ENCODE measurements at regions of chr20 and their contacts with region 1.

Region 1: DNA sequence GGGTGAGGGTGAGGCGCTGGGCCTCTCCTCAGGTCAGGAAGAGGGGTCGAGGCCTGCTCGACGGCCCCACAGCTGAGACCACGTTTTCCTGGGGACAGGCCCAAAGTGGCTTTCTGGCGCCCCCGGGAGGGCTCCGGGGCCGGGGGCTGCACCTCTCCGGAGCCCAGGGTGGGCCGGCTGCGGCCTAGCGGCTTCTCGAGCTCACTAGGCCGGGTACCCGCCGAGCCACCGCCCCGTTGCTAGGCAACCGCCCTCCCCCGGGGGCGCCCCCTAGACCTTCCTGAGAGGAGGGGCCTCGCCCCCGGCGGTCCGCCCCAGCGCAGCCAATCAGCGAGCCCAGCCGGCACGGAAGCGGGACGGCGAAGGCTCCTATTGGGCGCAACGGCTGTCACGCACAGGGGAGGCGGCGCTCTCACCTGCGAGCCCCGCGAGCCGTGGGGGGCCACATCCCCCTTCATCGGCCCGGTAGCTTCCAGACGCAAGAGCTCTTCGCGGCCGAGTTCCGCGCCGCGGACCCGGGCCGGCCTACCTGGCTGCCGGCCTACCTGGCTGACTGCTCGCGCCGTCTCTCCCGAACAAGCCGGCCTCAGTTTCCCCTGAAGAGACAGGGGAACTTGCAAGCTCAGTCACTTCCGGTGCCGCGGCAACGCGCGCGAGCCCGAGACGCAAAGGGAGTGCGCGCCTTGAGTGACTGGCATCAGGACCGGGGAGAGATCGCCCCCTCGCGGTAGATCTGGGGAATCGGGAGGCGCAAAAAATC is 831 bp upstream of the BCL2L1 start:
- DNase-seq: peak; percentile 98 to 99 (median 99)
- H3K4me3 ChIP-seq: peak overlapping the region; percentile 96
- H3K27ac ChIP-seq: peak overlapping the region; percentile 79 to 93
- H3K4me1 ChIP-seq: peaks cover 21% of the 10 kb centered on the region
- H3K27me3 ChIP-seq: no peaks in the 10 kb centered on the region
- CTCF ChIP-seq: peak; percentile 93 to 97 (median 95)
- EP300 ChIP-seq: no peak
- POLR2A ChIP-seq: peak; percentile 69

Region 2: DNA sequence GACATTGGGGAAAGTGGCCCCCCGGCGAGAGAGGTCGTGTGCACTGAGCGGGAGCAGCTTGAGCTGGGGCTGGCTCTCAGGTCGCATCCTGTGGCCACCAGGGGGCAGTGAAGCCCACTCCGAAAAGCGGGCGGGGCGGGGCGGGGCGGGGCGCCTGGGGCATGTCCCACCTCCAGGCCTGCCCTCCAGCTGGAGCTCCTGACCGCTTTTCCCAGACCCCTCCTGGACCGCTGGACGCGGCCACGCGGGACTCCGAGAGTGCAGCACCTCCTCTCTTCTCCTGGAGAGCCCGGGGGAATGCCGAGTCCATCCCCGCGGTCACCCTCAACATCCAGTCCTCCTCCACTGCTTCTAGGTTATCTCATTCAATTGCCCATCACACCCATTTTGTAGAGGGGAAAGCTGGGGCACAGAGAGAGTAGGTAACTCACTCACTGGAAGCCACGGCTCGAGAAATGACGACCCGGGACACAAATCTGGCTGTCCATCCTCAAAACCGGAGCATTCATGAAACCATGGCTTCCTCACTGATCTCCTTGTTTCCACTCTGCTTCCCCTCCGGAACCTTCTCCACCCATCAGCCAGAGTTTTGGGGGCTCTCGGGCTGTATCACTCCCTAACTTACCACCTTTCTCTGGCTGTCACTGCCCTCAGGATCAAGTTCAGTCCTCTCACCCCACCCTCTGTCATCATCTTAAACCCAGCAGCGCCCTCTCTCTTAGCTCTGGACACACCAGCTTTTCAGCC is 61.7 kb before region 1 on chr20:
- intact Hi-C with region 1: loop called (anchors 1 to 2 kb)
- DNase-seq: peak; percentile 81 to 90 (median 87)
- H3K4me3 ChIP-seq: peak overlapping the region; percentile 33
- H3K27ac ChIP-seq: peak overlapping the region in 1 of 2 donors; percentile 3
- H3K4me1 ChIP-seq: peaks cover 5% of the 10 kb centered on the region
- H3K27me3 ChIP-seq: no peaks in the 10 kb centered on the region
- CTCF ChIP-seq: peak; percentile 55 to 83 (median 66)
- EP300 ChIP-seq: no peak
- POLR2A ChIP-seq: no peak

Region 3: DNA sequence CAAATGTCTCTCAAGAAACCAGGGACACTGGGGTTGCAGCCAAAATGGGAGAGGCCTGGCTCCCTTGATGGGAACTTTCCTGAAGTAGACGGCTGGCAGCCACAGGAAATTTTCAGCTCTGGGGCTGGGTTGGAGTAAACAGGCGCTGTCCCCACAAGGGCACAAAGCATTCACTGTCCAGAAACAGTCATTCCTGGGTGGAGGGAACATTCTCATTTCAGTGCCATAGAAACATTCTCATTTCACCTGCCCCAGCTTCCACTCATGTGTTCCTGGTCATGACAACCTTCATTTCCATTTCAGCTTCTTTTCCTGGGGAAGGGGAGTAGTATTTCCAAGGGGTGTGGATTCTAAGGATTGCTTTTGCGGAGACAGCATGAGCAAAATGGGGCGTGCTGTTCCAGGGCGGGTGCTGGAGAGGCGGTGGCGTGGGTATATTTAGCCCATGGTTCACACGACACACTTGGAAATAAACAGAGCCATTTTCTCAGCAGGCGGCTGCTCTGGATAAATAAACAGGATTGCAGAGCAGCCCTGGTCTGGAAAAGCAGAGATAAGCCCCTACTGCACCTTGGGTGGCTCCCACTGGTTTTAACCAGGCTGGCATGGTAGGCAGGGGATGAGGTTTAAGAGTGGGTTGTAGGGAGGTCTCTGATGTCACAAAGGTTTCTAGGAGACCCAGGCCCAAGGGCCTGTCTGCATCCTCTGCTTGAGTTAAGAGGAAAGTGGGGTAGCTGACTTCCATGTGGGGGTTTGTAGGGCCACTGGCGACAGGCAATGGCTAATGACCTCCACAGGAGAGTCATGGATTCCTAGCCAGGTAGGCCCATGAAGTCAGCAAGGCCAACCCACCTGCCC is 52.9 kb before region 1 on chr20:
- intact Hi-C with region 1: loop called in 1 of 4 experiments (anchors 2 kb)
- DNase-seq: peak in 1 of 5 donors; percentile 34
- H3K4me3 ChIP-seq: no peak overlapping the region
- H3K27ac ChIP-seq: peak overlapping the region; percentile 1 to 57
- H3K4me1 ChIP-seq: peaks cover 27% of the 10 kb centered on the region
- H3K27me3 ChIP-seq: no peaks in the 10 kb centered on the region
- CTCF ChIP-seq: no peak
- EP300 ChIP-seq: no peak
- POLR2A ChIP-seq: no peak